OCI-LY7 (cell line): ENCODE measurements at regions of chr7 and their contacts with region 1.

Region 1: GRCh38 chr7:1503816-1504775 is at the start of gene INTS1:
- DNase-seq: peak; percentile 94
- H3K4me3 ChIP-seq: peak within 1 kb of the TSS; percentile 100
- H3K27ac ChIP-seq: peak within 1 kb of the TSS; percentile 90
- H3K4me1 ChIP-seq: peaks cover 48% of the 10 kb centered on the region
- CTCF ChIP-seq: peak; percentile 84
- total RNA-seq, gene INTS1: 61.5 and 83.6 TPM in 2 replicates

Region 2: DNA sequence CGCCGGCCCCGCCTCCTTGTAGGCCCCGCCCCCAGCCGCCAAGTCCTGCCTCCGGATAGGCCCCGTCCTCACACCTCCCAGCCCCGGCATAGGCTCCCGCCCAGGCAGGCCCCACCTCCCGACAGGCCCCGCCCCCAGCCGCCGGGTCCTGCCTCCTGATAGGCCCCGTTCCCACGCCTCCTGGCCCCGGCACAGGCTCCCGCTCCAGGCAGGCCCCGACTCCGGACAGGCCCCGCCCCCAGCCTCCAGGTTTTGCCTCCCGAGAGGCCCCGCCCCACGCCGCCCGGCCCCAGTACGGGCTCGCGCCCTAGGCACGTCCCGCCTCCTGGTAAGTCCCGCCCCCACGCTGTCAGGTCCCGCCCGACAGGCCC is 44.6 kb before region 1 on chr7:
- CTCF ChIA-PET with region 1: no interaction called
- POLR2A ChIA-PET with region 1: no interaction called
- intact Hi-C with region 1: loop called (anchors 1 kb)
- DNase-seq: peak; percentile 98
- H3K4me3 ChIP-seq: peak overlapping the region; percentile 71
- H3K27ac ChIP-seq: no peak overlapping the region
- H3K4me1 ChIP-seq: peaks cover 20% of the 10 kb centered on the region
- CTCF ChIP-seq: no peak

Region 3: GRCh38 chr7:1531243-1531978 is 27.3 kb after region 1 on chr7:
- CTCF ChIA-PET with region 1: interaction called, 5 read pairs
- POLR2A ChIA-PET with region 1: no interaction called
- intact Hi-C with region 1: loop called (anchors 2 kb)
- DNase-seq: peak; percentile 41
- H3K4me3 ChIP-seq: peak overlapping the region; percentile 82
- H3K27ac ChIP-seq: peak overlapping the region; percentile 30
- H3K4me1 ChIP-seq: peaks cover 34% of the 10 kb centered on the region
- CTCF ChIP-seq: no peak

Region 4: GRCh38 chr7:1545389-1546246 is 41.5 kb after region 1 on chr7:
- CTCF ChIA-PET with region 1: interaction called, 3 read pairs
- POLR2A ChIA-PET with region 1: no interaction called
- intact Hi-C with region 1: loop called (anchors 1 kb)
- DNase-seq: peak; percentile 23
- H3K4me3 ChIP-seq: no peak overlapping the region
- H3K27ac ChIP-seq: no peak overlapping the region
- H3K4me1 ChIP-seq: no peaks in the 10 kb centered on the region
- CTCF ChIP-seq: peak; percentile 54

Region 5: GRCh38 chr7:1558181-1558811 is 54.2 kb after region 1 on chr7:
- CTCF ChIA-PET with region 1: no interaction called
- POLR2A ChIA-PET with region 1: no interaction called
- intact Hi-C with region 1: loop called (anchors 1 kb)
- DNase-seq: peak; percentile 61
- H3K4me3 ChIP-seq: no peak overlapping the region
- H3K27ac ChIP-seq: no peak overlapping the region
- H3K4me1 ChIP-seq: peaks cover 7% of the 10 kb centered on the region
- CTCF ChIP-seq: peak; percentile 70

Region 6: DNA sequence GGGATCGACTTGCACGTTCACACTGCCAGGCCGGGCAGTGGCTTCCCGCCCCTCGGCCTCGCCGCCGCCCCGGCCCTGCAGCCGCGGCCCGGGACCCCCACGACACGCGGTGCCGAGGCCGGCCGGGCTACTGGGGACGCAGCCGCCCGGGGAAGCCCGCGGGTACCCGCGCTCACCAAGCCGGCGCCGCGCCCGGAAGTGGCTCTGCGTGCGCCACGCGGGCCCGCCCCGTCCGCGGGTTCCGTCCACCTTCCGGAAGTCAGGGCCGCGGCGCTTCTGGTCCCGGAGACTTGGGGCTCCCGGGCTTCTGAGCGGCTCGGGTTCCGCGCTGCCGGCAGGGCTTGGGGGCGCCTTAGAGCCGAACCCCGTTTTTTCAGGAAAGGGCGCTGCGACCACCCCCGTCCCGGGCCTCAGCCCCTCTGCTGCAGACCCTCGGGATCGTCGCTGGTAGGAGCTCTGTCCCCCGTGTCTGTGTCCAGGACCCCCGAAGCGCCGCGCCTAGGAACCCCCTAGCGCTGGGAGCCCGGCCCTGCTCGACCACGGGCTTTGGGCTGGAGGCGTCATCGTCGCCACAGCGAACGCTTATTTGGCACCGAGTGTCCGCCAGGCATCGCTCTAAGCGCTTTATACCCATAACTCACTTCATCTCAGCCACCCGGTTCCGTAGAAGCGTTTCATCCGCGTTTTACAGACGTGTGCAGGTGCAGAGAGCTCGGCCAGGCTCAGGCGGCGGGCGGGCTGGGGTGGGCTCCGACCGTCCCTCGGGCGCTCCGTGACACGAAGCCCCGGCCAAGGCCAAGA is 65.9 kb after region 1 on chr7 and contains the start of gene PSMG3:
- CTCF ChIA-PET with region 1: no interaction called
- POLR2A ChIA-PET with region 1: no interaction called
- intact Hi-C with region 1: loop called (anchors 1 kb)
- DNase-seq: peak; percentile 94
- H3K4me3 ChIP-seq: peak within 1 kb of the TSS; percentile 80
- H3K27ac ChIP-seq: peak within 1 kb of the TSS; percentile 72
- H3K4me1 ChIP-seq: peaks cover 27% of the 10 kb centered on the region
- CTCF ChIP-seq: peak; percentile 56
- total RNA-seq, gene PSMG3: 128 and 129 TPM in 2 replicates

Region 7: GRCh38 chr7:1752771-1753563 is 248.9 kb after region 1 on chr7:
- CTCF ChIA-PET with region 1: no interaction called
- POLR2A ChIA-PET with region 1: no interaction called
- intact Hi-C with region 1: loop called (anchors 2 kb)
- DNase-seq: peak; percentile 93
- H3K4me3 ChIP-seq: peak overlapping the region; percentile 60
- H3K27ac ChIP-seq: peak overlapping the region; percentile 87
- H3K4me1 ChIP-seq: peaks cover 68% of the 10 kb centered on the region
- CTCF ChIP-seq: no peak